ENCODE measurements at regions of chr16 and their contacts with region 1.

Region 1: DNA sequence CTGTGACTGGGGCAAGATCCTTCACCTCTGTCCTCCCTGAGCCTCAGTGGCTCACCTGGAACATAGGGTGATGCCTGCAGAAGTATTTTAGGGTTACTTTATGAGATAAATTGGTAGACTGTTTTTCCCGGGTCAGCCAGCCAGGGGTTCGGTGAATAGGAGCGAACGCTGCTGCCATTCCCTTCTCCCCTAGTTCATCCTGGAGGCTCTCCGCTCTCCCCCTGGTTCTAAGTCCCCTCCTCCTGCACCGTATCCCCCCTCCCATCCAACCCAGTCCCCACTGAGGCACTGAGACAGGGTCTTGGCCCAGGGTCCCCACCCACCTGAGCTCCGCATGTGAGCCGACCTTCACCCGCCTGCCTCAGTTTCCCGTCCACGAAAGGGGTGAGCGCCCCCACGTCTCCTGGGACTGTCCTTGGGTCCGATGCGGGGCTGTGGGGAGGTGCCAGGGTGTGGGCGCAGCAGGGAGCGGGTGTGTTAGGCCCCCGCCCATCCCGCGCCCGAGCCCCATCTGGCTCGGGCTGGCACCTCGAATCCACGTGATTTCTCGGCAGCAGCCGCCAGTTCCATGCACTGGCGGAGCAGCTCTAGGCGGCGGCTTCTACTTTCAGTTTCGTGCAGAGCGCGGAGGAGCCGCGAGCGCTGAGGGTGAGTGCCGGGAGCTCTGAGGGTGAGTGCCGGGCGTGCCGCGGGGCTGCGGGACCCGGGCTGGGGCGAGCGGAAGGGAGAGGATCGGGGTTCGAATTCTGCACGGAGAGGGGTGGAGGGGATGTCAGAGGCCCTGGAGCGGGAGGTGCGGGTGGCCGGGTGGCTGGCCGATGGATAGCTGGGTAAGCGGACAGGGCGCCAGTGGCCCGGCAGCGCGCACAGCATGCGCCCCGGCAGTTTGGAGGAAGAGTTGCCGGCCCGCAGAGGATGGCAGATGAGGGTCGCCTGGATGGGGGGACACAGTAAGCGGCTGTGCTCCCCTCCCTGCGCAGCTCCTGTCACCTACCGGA is at the start of gene NLRC5:
- DNase-seq: peak; percentile 90
- H3K4me3 Mint-ChIP-seq: peak within 1 kb of the TSS; percentile 97
- H3K27ac Mint-ChIP-seq: peak within 1 kb of the TSS; percentile 98
- H3K4me1 Mint-ChIP-seq: peaks cover 74% of the 10 kb centered on the region
- H3K27me3 Mint-ChIP-seq: no peaks in the 10 kb centered on the region
- total RNA-seq, gene NLRC5: 166 and 169 TPM in 2 replicates

Region 2: GRCh38 chr16:56764835-56765234 is 224.4 kb before region 1 on chr16:
- intact Hi-C with region 1: no loop called
- DNase-seq: no peak
- H3K4me3 Mint-ChIP-seq: no peak overlapping the region
- H3K27ac Mint-ChIP-seq: no peak overlapping the region
- H3K4me1 Mint-ChIP-seq: peaks cover 20% of the 10 kb centered on the region
- H3K27me3 Mint-ChIP-seq: no peaks in the 10 kb centered on the region

Region 3: DNA sequence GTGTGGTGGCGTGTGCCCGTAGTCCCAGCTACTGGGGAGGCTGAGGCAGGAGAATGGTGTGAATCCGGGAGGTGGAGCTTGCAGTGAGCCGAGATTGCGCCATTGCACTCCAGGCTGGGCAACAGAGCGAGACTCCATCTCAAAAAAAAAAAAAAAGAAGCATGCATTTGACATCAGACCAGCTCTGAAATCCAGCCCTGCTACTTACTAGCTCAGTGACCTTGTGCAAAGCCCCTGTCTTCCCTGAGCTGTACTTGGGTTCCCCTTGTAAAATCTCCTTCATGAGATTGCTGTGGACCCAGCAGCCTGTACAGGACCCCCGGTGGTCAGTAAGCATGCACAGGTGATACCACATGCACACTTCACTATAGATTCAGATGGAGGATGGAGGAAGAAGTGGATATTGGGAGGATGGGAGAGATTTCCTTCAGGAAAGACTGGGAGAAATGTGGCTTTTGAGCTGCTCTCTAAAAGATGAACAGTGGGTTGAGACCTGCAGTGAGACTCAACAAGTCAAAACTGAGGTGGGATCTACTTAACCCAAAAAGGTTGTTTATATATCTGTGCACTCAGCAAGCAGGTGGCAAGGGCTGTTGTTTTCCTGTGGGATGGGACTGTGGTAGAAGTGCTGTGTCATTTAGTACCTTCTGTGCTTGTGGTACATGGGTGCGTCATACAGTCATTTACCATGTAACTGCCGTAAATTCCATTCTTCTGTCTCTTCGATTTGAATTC is 50.7 kb before region 1 on chr16:
- intact Hi-C with region 1: loop called (anchors 5 kb)
- DNase-seq: peak; percentile 47
- H3K4me3 Mint-ChIP-seq: peak overlapping the region; percentile 80
- H3K27ac Mint-ChIP-seq: peak overlapping the region; percentile 92
- H3K4me1 Mint-ChIP-seq: peaks cover 74% of the 10 kb centered on the region
- H3K27me3 Mint-ChIP-seq: no peaks in the 10 kb centered on the region

Region 4: GRCh38 chr16:56964243-56965148 is 24.8 kb before region 1 on chr16:
- intact Hi-C with region 1: loop called (anchors 2 kb)
- DNase-seq: peak; percentile 89
- H3K4me3 Mint-ChIP-seq: no peak overlapping the region
- H3K27ac Mint-ChIP-seq: peak overlapping the region; percentile 36
- H3K4me1 Mint-ChIP-seq: peaks cover 18% of the 10 kb centered on the region
- H3K27me3 Mint-ChIP-seq: peaks cover 2% of the 10 kb centered on the region

Region 5: GRCh38 chr16:57000271-57001025 is 11.2 kb after region 1 on chr16:
- intact Hi-C with region 1: loop called (anchors 1 kb)
- DNase-seq: no peak
- H3K4me3 Mint-ChIP-seq: peak overlapping the region; percentile 52
- H3K27ac Mint-ChIP-seq: peak overlapping the region; percentile 98
- H3K4me1 Mint-ChIP-seq: peaks cover 75% of the 10 kb centered on the region
- H3K27me3 Mint-ChIP-seq: no peaks in the 10 kb centered on the region

Region 6: DNA sequence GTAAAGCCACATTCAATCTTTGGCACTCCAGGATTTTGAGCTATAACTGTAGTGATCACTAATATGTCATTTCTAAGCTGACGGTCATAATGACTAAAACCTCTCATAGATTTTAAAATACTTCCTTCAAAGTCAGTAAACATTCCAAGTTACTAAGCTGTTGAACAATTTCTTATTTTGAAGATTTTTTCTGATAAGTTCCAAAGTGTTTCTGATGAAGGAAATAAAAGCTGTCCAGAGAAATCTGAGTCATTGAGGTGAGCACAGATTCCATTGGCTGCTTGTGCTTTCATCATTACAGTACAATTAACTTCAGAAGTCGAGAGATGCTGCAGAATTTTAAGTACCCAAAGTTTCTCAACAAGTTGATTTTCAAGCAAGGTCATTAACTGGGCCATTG is 24.0 kb after region 1 on chr16:
- intact Hi-C with region 1: loop called (anchors 1 kb)
- DNase-seq: no peak
- H3K4me3 Mint-ChIP-seq: peak overlapping the region; percentile 14
- H3K27ac Mint-ChIP-seq: peak overlapping the region; percentile 97
- H3K4me1 Mint-ChIP-seq: peaks cover 74% of the 10 kb centered on the region
- H3K27me3 Mint-ChIP-seq: no peaks in the 10 kb centered on the region

Region 7: DNA sequence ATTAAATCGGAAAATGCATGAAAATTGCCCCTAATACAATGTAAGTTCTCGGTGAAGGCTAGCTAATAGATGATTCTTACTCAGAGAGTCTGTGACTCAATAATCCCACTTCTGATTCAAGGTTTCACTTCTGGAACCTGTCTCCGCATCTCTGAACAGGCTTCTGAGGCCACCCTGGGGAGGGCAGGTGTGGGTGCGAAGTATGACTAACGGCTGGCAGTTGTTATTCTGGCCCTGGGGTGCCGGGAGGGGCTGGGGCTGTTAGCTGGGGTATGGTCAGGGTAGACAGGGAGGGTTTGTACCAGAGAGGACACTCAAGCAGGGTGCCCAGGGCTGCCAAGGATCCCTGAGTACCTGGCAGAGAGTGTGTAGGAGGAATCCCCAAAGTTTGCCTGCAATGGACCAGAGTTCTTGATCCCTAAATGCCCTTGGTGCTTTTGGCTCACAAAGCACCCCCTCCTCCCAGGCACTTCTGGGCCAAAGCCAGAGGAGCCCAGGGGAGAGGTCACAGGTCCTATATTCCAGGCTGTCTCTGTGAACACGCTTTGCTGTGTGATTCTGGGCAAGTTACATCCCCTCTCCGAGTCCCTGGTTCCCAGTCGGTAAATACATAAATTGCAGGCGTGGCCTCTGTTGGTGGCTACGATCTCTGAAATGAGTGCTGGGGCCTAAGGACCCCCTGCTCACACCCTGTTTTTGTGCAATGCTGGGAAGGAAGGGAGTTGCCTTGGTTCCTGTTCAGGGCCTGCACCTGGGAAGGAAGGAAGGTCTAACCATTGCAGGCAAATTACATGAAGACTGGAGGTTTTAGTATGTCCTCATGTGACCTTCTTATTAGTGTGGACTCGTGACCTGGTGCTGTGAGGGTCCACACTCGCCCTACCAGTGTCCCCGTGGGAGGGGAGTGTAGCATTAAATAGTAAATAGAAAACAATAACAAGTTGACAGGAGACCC is 53.2 kb after region 1 on chr16:
- intact Hi-C with region 1: loop called (anchors 1 kb)
- DNase-seq: peak; percentile 67
- H3K4me3 Mint-ChIP-seq: peak overlapping the region; percentile 62
- H3K27ac Mint-ChIP-seq: peak overlapping the region; percentile 94
- H3K4me1 Mint-ChIP-seq: peaks cover 60% of the 10 kb centered on the region
- H3K27me3 Mint-ChIP-seq: no peaks in the 10 kb centered on the region

Region 8: DNA sequence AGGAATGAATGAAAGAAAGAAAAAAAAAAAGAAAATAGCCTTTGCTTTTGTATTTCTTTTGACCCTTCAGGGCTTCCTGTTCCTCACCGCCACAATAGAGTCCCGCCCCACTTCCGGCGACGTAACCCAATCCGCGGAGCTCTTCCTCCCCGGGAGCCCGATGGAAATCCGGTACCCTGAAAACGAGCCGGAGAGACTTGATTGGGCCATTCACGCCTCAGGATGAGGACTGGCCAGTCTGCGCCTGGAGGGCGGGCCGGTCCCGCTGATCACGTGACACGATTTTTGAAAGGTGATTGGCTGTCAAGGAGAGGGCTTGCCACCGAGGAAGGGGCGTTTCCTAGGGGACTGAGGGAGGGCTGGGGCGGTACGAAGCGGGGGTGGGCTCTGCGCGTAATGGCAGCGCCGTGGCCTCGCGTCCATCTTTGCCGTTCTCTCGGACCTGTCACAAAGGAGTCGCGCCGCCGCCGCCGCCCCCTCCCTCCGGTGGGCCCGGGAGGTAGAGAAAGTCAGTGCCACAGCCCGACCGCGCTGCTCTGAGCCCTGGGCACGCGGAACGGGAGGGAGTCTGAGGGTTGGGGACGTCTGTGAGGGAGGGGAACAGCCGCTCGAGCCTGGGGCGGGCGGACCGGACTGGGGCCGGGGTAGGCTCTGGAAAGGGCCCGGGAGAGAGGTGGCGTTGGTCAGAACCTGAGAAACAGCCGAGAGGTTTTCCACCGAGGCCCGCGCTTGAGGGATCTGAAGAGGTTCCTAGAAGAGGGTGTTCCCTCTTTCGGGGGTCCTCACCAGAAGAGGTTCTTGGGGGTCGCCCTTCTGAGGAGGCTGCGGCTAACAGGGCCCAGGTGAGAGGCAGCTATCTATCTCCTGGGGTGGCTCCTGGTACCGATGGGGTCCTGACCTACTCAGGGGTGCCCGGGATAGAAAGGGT is 197.0 kb after region 1 on chr16 and contains the starts of genes PSME3IP1 and RSPRY1:
- intact Hi-C with region 1: loop called (anchors 5 kb)
- DNase-seq: peak; percentile 99
- H3K4me3 Mint-ChIP-seq: peak within 1 kb of the TSS; percentile 98
- H3K27ac Mint-ChIP-seq: peak within 1 kb of the TSS; percentile 96
- H3K4me1 Mint-ChIP-seq: peaks cover 36% of the 10 kb centered on the region
- H3K27me3 Mint-ChIP-seq: no peaks in the 10 kb centered on the region
- total RNA-seq, gene PSME3IP1: 109 and 125 TPM in 2 replicates
- total RNA-seq, gene RSPRY1: 33.3 and 43.0 TPM in 2 replicates

Region 9: GRCh38 chr16:57757326-57757786 is 768.1 kb after region 1 on chr16:
- intact Hi-C with region 1: no loop called
- DNase-seq: peak; percentile 79
- H3K4me3 Mint-ChIP-seq: no peak overlapping the region
- H3K27ac Mint-ChIP-seq: no peak overlapping the region
- H3K4me1 Mint-ChIP-seq: peaks cover 6% of the 10 kb centered on the region
- H3K27me3 Mint-ChIP-seq: no peaks in the 10 kb centered on the region